ENCODE measurements at regions of chr10 and their contacts with region 1.

Region 1: DNA sequence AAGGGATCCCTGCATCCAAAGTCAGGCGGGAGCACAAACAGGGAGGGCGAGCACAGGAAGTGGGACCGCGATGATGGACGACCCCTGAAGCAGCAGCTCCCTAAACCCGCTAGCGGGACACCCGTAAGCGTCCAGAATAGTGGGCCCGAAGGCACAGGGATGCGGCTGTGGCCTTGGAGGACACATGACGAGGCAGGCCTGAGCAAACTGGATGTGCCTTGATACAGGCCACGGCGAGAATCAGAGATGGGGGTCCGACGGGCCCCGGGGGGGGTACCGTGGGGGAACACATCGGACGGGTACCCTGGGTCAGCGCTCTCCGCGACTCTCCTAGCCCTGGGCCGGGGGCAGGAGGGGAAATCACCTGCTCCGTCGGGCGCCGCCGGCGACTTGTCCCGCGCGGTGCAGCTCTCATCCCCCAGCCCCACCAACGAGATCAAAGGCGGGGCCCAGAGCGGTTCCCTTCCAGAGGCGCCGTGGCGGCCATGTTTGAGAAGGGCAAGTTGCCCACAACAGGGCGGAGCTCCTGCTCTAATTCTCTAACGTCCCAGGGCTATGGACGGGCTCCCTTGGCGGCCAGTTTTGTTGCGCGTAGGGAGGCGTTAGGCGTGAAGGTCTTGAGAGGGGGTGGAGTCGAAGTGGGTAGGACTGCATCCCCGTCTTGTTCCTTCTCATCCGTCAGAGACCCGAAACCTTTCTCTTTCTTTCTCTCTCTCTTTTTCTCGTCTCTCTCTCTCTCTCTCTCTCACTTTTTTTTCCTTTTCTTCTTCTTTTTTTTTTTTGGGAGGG is at the start of gene CUEDC2:
- DNase-seq: peak; percentile 98
- H3K4me3 ChIP-seq: peak within 1 kb of the TSS; percentile 88
- H3K27ac ChIP-seq: peak within 1 kb of the TSS; percentile 41
- H3K4me1 ChIP-seq: peaks cover 19% of the 10 kb centered on the region
- CTCF ChIP-seq: peak; percentile 37; the same call in 1 of the 2 replicates
- total RNA-seq, gene CUEDC2: 48.9 and 61.0 TPM in 2 replicates

Region 2: DNA sequence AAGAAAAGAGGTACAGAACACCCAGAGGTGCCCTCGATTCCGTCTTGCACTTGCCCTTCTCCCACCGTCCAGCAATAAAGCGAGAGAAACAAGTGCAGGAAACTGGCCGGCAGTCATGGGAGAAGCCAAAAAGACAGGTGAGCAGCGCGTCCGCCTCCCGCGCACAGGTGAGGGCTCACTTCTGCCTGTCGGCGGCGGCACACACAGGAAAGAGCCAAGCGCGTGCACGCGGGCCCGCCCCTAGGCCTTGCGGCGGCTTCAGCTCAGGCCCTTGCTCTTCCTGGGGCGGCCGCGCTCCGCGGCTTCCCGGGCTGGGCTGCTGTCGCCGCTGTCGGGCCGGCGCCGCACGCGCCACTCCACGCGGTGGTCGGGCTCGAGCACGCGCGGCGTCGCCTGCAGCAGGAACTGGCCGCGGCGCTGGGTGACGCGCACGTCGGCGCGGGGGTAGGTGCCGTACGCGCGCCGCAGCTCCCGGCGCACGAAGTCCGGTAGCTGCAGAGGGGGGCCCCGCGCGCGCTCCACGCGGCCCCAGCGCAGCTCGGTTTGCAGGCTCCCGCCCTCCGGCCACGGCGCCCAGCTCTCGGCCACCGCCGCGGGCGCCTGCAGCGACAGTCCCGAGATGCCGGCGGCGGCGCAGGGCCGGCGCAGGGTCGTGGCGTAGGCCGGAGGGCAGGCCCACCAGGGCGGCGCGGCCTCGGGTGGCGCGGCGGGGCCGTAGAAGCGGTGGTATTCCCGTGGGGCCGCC is 18.0 kb after region 1 on chr10:
- CTCF ChIA-PET with region 1: interaction called, 3 read pairs
- POLR2A ChIA-PET with region 1: interaction called, 22 read pairs
- intact Hi-C with region 1: loop called (anchors 1 kb)
- DNase-seq: peak; percentile 94
- H3K4me3 ChIP-seq: peak overlapping the region; percentile 96
- H3K27ac ChIP-seq: peak overlapping the region; percentile 83
- H3K4me1 ChIP-seq: peaks cover 33% of the 10 kb centered on the region
- CTCF ChIP-seq: no peak